Cardiac septum (tissue), 1 donor: ENCODE measurements at regions of chr5 and their contacts with region 1.

Region 1: DNA sequence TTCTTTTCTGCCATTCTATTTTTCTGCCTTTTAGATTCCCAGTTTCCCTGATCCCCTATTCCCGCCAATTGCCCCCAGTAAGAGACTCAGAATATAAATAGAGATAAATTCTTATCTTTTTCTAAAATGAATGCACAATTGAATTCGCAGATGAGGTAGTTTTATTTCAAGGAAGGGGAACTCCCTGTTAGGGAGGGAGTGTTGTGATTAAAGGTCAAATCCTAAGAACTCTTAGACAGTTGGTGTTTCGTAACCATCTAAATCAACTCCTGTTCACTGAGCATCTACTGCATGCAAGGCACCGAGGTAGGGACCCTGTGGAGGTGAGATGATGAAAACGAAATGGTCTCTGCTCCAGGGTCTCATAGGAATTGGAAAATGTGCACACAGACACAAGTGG is 7.7 kb upstream of the MAP3K1 start:
- DNase-seq: no peak

Region 2: GRCh38 chr5:56710826-56711590 is 96.7 kb before region 1 on chr5:
- intact Hi-C with region 1: no loop called
- DNase-seq: no peak

Region 3: DNA sequence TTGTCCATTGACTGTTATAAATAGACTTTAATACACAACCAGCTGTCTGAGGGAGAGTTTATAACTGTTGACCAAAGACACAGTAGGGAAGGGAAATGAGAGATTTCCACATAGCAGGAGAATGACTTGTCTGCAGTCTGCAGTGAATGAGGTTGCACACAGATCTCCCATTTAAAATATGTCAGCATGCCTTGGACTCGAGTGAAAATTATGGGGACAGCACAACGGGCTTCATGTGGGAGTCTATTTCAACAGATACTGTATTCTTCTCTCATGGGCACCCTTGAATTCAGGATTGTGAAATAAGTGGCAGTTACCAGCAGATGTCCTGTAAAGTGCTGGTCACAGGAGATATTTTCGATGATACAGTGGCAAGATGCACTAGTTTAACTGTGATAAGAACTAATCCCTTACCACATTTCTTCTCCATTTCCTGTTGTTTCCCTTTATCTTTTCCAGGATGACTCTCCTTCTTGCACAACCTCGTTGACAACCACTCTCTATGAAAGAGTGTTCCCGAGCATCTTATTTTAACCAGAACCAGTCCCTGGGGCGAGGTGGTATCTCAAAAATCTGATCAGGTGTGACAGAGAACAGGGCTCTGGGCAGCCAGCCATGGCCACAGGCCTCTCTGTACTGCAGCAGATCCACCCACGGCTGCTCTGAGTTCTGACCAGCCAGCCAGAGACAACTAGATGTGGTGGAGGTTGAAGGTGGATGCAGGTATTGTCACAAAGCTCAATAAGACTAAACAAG is 43.8 kb before region 1 on chr5:
- intact Hi-C with region 1: loop called (anchors 5 kb)
- DNase-seq: no peak